CD4-positive, alpha-beta memory T cell (primary cell): ENCODE measurements at regions of chr6 and their contacts with region 1.

Region 1: DNA sequence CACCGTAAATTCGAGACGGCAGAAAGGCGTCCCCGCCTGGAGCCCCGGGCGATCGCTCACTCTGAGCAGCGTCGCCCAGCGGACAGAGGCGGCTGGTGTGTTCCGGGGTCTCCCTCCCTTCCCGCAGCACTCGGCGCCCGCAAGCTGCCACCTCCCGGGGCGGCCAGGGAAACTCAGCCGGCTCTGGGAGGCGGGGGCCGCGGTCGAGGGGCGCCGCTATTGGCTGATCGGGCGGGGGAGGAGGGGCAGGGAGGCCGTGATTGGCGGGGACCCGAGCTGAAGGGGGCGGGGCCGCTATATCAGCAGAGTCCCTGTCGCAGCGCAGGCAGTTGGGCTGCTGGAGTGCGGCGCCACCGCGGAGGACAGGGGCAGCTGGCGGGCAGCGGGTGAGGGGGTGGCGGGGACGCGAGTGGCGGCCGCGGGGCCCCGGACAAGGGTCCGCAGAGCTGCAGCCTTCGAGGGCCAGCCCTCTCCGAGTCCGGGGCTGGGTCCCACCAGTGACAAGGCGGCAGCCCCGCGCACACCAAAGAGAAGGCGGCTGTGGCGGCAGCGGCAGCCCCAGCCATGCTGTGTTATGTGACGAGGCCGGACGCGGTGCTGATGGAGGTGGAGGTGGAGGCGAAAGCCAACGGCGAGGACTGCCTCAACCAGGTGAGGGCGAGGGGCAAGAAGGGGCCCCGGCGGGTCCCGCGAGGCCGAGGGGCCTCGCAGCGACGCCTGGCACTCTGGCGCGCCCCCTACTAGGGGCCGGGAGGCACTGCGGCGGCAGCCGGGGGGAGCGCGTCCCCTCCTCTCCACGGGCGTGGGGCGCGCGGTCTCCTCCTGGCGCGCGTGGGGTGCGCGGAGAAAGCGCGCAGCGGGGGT is at the start of gene MYLIP:
- DNase-seq: peak; percentile 96 to 97 (median 97)
- H3K4me3 ChIP-seq: peak within 1 kb of the TSS; percentile 66 to 89
- H3K4me3 Mint-ChIP-seq: peak within 1 kb of the TSS; percentile 95 to 99 (median 98)
- H3K27ac ChIP-seq: peak within 1 kb of the TSS; percentile 93
- H3K27ac Mint-ChIP-seq: peak within 1 kb of the TSS; percentile 96 to 98 (median 97)
- H3K4me1 ChIP-seq: peaks cover 38% of the 10 kb centered on the region
- H3K4me1 Mint-ChIP-seq: peaks cover 18 to 54% (median 31%) of the 10 kb centered on the region in 4 donors
- H3K27me3 ChIP-seq: no peaks in the 10 kb centered on the region
- H3K27me3 Mint-ChIP-seq: peaks cover 3% of the 10 kb centered on the region in 2 donors
- total RNA-seq, gene MYLIP: 17.5 to 19.9 TPM

Region 2: GRCh38 chr6:15662326-15663129 is 466.5 kb before region 1 on chr6 and contains the start of gene DTNBP1:
- CTCF ChIA-PET with region 1: no interaction called
- POLR2A ChIA-PET with region 1: interaction called, 9 read pairs
- intact Hi-C with region 1: loop called (anchors 1 kb)
- DNase-seq: peak; percentile 79 to 87 (median 81)
- H3K4me3 ChIP-seq: peak within 1 kb of the TSS; percentile 62 to 76
- H3K4me3 Mint-ChIP-seq: peak within 1 kb of the TSS; percentile 73 to 91 (median 86)
- H3K27ac ChIP-seq: peak within 1 kb of the TSS; percentile 60
- H3K27ac Mint-ChIP-seq: peak within 1 kb of the TSS; percentile 77 to 88 (median 86)
- H3K4me1 ChIP-seq: peaks cover 21% of the 10 kb centered on the region
- H3K4me1 Mint-ChIP-seq: peaks cover 24 to 47% (median 37%) of the 10 kb centered on the region in 4 donors
- H3K27me3 ChIP-seq: no peaks in the 10 kb centered on the region
- H3K27me3 Mint-ChIP-seq: peaks cover 0 to 4% of the 10 kb centered on the region in 2 donors
- total RNA-seq, gene DTNBP1: 24.1 TPM

Region 3: GRCh38 chr6:15691250-15691869 is 437.6 kb before region 1 on chr6:
- CTCF ChIA-PET with region 1: interaction called, 5 read pairs
- POLR2A ChIA-PET with region 1: no interaction called
- intact Hi-C with region 1: loop called (anchors 2 kb)
- DNase-seq: peak; percentile 75 to 80 (median 77)
- H3K4me3 ChIP-seq: no peak overlapping the region
- H3K4me3 Mint-ChIP-seq: peak overlapping the region in 1 of 8 donors; percentile 11
- H3K27ac ChIP-seq: no peak overlapping the region
- H3K27ac Mint-ChIP-seq: peak overlapping the region in 4 of 7 donors; percentile 4 to 36 (median 20)
- H3K4me1 ChIP-seq: no peaks in the 10 kb centered on the region
- H3K4me1 Mint-ChIP-seq: peaks cover 4 to 8% (median 5%) of the 10 kb centered on the region in 4 donors
- H3K27me3 ChIP-seq: no peaks in the 10 kb centered on the region
- H3K27me3 Mint-ChIP-seq: peaks cover 7% of the 10 kb centered on the region in 2 donors

Region 4: GRCh38 chr6:16236631-16237199 is 107.7 kb after region 1 on chr6:
- CTCF ChIA-PET with region 1: no interaction called
- POLR2A ChIA-PET with region 1: no interaction called
- intact Hi-C with region 1: no loop called
- DNase-seq: no peak
- H3K4me3 ChIP-seq: no peak overlapping the region
- H3K4me3 Mint-ChIP-seq: peak overlapping the region; percentile 27 to 87 (median 52)
- H3K27ac ChIP-seq: no peak overlapping the region
- H3K27ac Mint-ChIP-seq: no peak overlapping the region
- H3K4me1 ChIP-seq: peaks cover 22% of the 10 kb centered on the region
- H3K4me1 Mint-ChIP-seq: peaks cover 14 to 26% (median 20%) of the 10 kb centered on the region in 4 donors
- H3K27me3 ChIP-seq: peaks cover 9% of the 10 kb centered on the region
- H3K27me3 Mint-ChIP-seq: peaks cover 21 to 25% of the 10 kb centered on the region in 2 donors

Region 5: DNA sequence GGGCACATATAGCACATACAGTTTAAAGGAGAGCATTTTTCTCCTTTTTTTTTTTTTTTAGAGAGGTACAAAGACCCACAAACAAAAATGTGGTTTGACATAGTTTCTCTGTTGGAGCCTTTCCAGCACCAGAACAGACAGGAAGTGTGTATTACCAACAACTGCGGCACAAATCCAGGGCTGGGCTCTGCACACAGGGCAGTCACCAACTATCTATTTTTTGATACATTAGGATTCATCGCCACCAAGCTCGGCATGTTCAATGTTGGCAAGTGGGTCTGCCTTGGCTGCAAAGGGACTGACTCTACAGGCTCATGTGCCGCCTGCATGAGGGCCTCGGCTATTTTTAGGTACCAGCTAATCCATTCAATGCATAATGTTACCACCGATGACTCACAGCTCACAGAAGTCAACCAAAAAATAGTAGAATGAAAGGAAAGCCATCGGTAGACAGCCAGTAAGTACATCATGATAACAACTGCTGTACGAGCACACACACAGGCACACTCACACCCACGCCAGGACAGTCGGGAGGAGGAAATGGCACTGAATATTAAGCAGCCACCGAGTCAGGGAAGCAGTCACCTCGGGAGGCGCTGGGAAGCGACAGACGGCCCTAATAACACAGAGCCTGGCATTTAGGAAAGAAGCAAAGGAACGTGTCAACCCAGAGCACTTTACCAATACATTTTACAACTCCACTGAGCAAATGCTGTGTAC is 191.0 kb after region 1 on chr6:
- CTCF ChIA-PET with region 1: interaction called, 4 read pairs
- POLR2A ChIA-PET with region 1: interaction called, 3 read pairs
- intact Hi-C with region 1: loop called (anchors 10 kb)
- DNase-seq: peak; percentile 80 to 94 (median 86)
- H3K4me3 ChIP-seq: peak overlapping the region; percentile 19 to 41
- H3K4me3 Mint-ChIP-seq: peak overlapping the region; percentile 76 to 89 (median 83)
- H3K27ac ChIP-seq: peak overlapping the region; percentile 82
- H3K27ac Mint-ChIP-seq: peak overlapping the region; percentile 93 to 98 (median 97)
- H3K4me1 ChIP-seq: peaks cover 84% of the 10 kb centered on the region
- H3K4me1 Mint-ChIP-seq: peaks cover 47 to 84% (median 71%) of the 10 kb centered on the region in 4 donors
- H3K27me3 ChIP-seq: no peaks in the 10 kb centered on the region
- H3K27me3 Mint-ChIP-seq: no peaks in the 10 kb centered on the region